Activated naive CD4-positive, alpha-beta T cell treated with anti-CD3 and anti-CD28 coated beads for 36 hours (primary cell): ENCODE measurements at regions of chr9 and their contacts with region 1.

Region 1: GRCh38 chr9:757246-757881 is 84.1 kb upstream of the DMRT1 start:
- DNase-seq: peak; percentile 35
- H3K4me3 Mint-ChIP-seq: no peak overlapping the region
- H3K27ac Mint-ChIP-seq: no peak overlapping the region
- H3K4me1 Mint-ChIP-seq: peaks cover 3% of the 10 kb centered on the region
- H3K27me3 Mint-ChIP-seq: no peaks in the 10 kb centered on the region

Region 2: GRCh38 chr9:693201-694091 is 63.9 kb before region 1 on chr9:
- CTCF ChIA-PET with region 1: no interaction called
- intact Hi-C with region 1: loop called (anchors 10 kb)
- DNase-seq: no peak
- H3K4me3 Mint-ChIP-seq: no peak overlapping the region
- H3K27ac Mint-ChIP-seq: no peak overlapping the region
- H3K4me1 Mint-ChIP-seq: peaks cover 6% of the 10 kb centered on the region
- H3K27me3 Mint-ChIP-seq: no peaks in the 10 kb centered on the region

Region 3: GRCh38 chr9:744046-744712 is 13.2 kb before region 1 on chr9:
- CTCF ChIA-PET with region 1: no interaction called
- intact Hi-C with region 1: no loop called
- DNase-seq: no peak
- H3K4me3 Mint-ChIP-seq: no peak overlapping the region
- H3K27ac Mint-ChIP-seq: no peak overlapping the region
- H3K4me1 Mint-ChIP-seq: peaks cover 10% of the 10 kb centered on the region
- H3K27me3 Mint-ChIP-seq: no peaks in the 10 kb centered on the region

Region 4: DNA sequence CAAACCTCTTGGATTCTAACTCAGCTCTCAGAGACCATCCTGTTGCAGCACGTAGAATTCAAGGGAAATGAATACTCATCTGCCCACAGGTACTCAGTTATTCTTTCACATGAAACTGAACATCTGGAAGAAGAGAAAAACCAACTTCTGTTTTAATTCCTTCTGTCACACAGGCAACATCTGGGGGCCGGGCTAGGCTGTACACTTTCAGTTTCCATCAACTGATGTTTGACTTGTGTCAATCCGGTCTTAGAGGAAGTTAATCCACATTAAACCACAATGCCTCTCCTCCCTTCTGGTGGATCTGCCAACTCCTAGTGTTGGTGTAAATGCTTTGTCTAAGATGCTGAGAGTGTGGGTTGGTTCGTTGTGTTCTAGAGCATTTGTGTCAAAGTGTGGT is 236.6 kb after region 1 on chr9:
- CTCF ChIA-PET with region 1: no interaction called
- intact Hi-C with region 1: no loop called
- DNase-seq: no peak
- H3K4me3 Mint-ChIP-seq: no peak overlapping the region
- H3K27ac Mint-ChIP-seq: no peak overlapping the region
- H3K4me1 Mint-ChIP-seq: no peaks in the 10 kb centered on the region
- H3K27me3 Mint-ChIP-seq: peaks cover 18% of the 10 kb centered on the region